ENCODE measurements at regions of chr11 and their contacts with region 1.

Region 1: GRCh38 chr11:69101115-69101791 is 52.5 kb downstream of the TPCN2 start:
- DNase-seq: peak; percentile 98
- H3K4me3 ChIP-seq: no peak overlapping the region
- H3K27ac ChIP-seq: peak overlapping the region; percentile 72
- H3K4me1 ChIP-seq: peaks cover 28% of the 10 kb centered on the region
- H3K27me3 ChIP-seq: no peaks in the 10 kb centered on the region
- CTCF ChIP-seq: peak; percentile 100

Region 2: DNA sequence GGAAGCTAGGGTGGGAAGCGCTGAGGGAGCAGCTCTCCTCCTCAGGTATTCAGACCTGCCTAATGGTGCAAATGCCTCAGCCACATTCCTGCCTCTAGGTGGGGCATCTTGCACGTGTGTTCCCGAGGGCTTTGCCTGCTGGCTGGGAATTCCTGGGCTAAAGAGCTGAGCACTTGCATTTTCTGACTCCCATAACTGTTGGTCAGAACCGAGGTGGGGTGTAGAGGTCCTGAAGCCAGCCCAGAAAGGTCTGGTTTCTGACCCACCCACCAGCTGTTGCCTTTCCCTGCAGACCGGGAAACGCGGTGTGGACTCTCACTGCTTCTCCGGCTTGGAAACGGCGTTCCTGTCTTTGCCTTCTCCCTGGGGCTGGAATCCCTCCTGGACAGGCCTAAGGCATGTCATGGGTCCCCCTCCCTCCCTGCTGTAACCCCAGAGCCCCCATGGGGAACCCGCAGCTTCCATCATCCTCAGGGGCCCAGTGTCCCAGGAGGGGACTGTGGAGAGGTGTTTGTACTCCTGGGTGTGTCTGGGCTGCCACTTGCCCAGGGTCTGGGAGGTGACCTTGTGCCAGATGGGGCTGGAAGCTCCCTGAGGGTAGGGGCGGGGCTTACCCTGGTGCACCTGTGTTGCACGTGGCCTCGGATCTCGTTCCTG is 30.5 kb after region 1 on chr11:
- CTCF ChIA-PET with region 1: interaction called, 10 read pairs
- POLR2A ChIA-PET with region 1: no interaction called
- intact Hi-C with region 1: no loop called
- DNase-seq: peak; percentile 88
- H3K4me3 ChIP-seq: no peak overlapping the region
- H3K27ac ChIP-seq: peak overlapping the region; percentile 91
- H3K4me1 ChIP-seq: peaks cover 28% of the 10 kb centered on the region
- H3K27me3 ChIP-seq: no peaks in the 10 kb centered on the region
- CTCF ChIP-seq: peak; percentile 97

Region 3: GRCh38 chr11:69296890-69297786 is 195.9 kb after region 1 on chr11:
- CTCF ChIA-PET with region 1: interaction called, 4 read pairs
- POLR2A ChIA-PET with region 1: no interaction called
- intact Hi-C with region 1: loop called (anchors 2 kb)
- DNase-seq: peak; percentile 98
- H3K4me3 ChIP-seq: peak overlapping the region; percentile 77
- H3K27ac ChIP-seq: peak overlapping the region; percentile 92
- H3K4me1 ChIP-seq: peaks cover 74% of the 10 kb centered on the region
- H3K27me3 ChIP-seq: no peaks in the 10 kb centered on the region
- CTCF ChIP-seq: no peak

Region 4: GRCh38 chr11:69443138-69443967 is 342.1 kb after region 1 on chr11:
- CTCF ChIA-PET with region 1: no interaction called
- POLR2A ChIA-PET with region 1: no interaction called
- intact Hi-C with region 1: loop called (anchors 5 kb)
- DNase-seq: peak; percentile 98
- H3K4me3 ChIP-seq: peak overlapping the region; percentile 38
- H3K27ac ChIP-seq: peak overlapping the region; percentile 79
- H3K4me1 ChIP-seq: peaks cover 29% of the 10 kb centered on the region
- H3K27me3 ChIP-seq: no peaks in the 10 kb centered on the region
- CTCF ChIP-seq: no peak

Region 5: GRCh38 chr11:69642913-69643632 is 541.8 kb after region 1 on chr11:
- CTCF ChIA-PET with region 1: interaction called, 5 read pairs
- POLR2A ChIA-PET with region 1: interaction called, 3 read pairs
- intact Hi-C with region 1: loop called (anchors 1 kb)
- DNase-seq: peak; percentile 92
- H3K4me3 ChIP-seq: peak overlapping the region; percentile 86
- H3K27ac ChIP-seq: peak overlapping the region; percentile 99
- H3K4me1 ChIP-seq: peaks cover 30% of the 10 kb centered on the region
- H3K27me3 ChIP-seq: no peaks in the 10 kb centered on the region
- CTCF ChIP-seq: peak; percentile 82

Region 6: DNA sequence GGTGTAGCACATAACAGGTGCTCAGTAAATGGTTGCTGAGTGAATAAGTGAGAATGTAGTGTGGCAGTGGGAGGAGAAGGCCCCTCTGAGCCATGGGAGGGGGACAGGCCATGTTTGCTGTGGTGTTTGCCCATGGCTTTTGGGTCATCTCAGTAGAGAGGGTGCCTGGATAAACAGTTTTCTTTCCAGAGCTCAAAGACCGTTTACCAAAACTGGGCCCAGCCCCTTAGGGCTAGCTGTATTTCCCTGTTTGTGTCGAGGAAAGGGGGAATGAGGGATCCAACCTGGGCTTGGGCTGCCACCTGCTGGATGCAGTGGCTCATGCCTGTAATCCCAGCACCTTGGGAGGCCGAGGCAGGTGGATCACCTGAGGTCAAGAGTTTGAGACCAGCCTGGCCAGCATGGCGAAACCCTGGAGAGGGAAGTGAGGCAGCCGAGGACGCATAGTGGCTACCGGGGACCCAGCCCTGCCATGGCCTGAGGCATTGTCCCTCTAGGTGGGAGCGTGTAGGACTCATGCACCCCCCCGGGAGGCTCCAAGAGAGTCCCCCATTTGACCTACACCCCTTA is 582.6 kb after region 1 on chr11:
- CTCF ChIA-PET with region 1: interaction called, 24 read pairs
- POLR2A ChIA-PET with region 1: no interaction called
- intact Hi-C with region 1: loop called (anchors 1 kb)
- DNase-seq: peak; percentile 81
- H3K4me3 ChIP-seq: no peak overlapping the region
- H3K27ac ChIP-seq: no peak overlapping the region
- H3K4me1 ChIP-seq: no peaks in the 10 kb centered on the region
- H3K27me3 ChIP-seq: no peaks in the 10 kb centered on the region
- CTCF ChIP-seq: peak; percentile 83